Activated T-helper 2 cell treated with anti-CD3 and anti-CD28 coated beads, Interferon-gamma antibody, Interleukin-2, Interleukin-4, amounts not matched to agents 10 μg/mL and 5 μg/mL and 100 μg/mL, durations not matched to agents 14 hours and 24 hours and 36 hours (primary cell): ENCODE measurements at regions of chr3 and their contacts with region 1.

Region 1: DNA sequence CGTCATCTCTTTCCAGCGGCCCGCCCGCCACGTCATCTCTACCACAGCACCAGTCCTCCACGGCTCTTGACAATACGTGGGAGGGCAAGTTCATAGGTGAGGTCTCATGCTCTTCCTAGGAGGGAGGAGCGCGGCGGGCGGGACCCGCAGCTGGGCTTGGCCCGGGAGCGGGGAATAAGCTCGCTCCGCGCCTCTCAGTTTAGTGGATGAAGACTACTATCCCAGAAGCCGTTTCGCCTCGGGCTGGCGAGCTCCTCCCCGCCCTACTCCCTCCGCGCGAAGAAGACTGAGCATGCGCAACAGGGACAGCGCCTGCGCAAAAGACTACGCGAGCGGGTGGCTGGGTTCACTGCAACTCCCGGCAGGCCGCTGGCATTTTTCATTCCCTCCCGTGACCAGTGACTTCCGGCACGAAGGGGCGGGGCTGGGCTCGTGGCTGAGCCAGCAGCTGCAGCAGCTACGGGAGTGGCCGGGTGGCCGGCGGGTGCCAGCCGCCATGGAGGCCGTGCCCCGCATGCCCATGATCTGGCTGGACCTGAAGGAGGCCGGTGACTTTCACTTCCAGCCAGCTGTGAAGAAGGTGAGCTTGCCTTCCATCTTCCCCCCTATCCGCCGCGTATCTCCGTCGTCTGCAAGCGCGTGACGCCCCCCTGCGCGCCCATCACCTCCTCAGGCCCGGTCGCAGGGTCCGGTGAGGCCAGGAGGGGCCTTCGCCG is at the start of gene PTPN23:
- DNase-seq: peak; percentile 99
- H3K4me3 Mint-ChIP-seq: peak within 1 kb of the TSS; percentile 100
- H3K27ac Mint-ChIP-seq: peak within 1 kb of the TSS; percentile 100
- H3K4me1 Mint-ChIP-seq: peaks cover 33% of the 10 kb centered on the region
- H3K27me3 Mint-ChIP-seq: no peaks in the 10 kb centered on the region
- total RNA-seq, gene PTPN23: 35.7 and 38.3 TPM in 2 replicates

Region 2: DNA sequence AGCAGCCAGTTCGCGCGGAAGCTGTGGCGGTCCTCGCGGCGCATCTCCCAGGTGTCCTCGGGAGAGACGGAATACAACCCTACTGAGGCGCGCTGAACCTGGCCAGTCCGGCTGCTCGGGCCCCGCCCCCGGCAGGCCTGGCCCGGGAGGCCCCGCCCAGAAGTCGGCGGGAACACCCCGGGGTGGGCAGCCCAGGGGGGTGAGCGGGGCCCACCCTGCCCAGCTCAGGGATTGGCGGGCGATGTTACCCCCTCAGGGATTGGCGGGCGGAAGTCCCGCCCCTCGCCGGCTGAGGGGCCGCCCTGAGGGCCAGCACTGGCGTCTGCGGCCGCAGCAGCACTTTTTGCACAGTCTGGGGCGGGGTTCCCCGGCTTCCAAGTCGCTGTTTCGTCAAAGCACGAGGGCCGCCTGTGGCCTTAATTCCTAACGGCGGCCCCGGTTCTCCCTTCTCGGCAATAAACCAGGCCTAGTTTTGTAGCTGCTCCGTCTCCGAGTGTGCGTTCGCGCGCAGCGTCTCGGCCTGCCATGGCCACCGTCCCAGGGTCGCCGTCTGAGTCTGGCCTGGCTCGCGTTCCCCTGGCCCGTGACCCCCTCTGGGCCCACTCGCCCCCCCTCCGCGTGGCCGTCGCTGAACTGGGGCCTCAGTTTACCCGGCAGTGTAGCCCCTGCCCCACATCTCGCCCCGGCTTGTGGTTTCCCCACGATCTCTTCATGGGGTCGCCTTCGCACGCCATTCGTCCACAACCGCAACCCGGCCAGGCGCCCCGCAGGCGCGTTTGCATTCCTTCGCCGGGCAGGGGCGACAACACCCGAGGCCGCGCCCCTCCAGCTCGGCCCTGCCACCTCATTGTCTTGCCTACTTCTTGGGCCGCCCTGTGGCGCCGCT is 371.3 kb before region 1 on chr3:
- intact Hi-C with region 1: loop called (anchors 10 kb)
- DNase-seq: peak; percentile 50
- H3K4me3 Mint-ChIP-seq: no peak overlapping the region
- H3K27ac Mint-ChIP-seq: peak overlapping the region; percentile 8
- H3K4me1 Mint-ChIP-seq: no peaks in the 10 kb centered on the region
- H3K27me3 Mint-ChIP-seq: no peaks in the 10 kb centered on the region

Region 3: DNA sequence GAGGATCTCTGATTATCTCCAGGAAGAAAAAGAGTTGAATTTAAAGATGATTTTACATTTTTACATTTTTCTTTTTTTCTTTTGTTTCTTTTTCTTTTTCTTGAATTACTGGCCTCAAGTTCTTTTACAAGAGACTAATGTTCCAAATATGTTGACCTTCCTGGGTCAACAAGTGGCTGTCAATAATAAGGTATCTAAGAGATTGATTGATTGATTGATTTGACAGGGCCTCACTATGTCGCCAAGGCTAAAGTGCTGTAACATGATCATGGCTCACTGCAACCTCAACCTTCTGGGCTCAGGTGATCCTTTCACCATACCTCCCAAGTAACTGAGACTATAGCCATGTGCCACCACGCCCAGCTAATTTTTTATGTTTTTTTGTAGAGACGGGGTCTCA is 142.7 kb before region 1 on chr3:
- intact Hi-C with region 1: no loop called
- DNase-seq: no peak
- H3K4me3 Mint-ChIP-seq: no peak overlapping the region
- H3K27ac Mint-ChIP-seq: no peak overlapping the region
- H3K4me1 Mint-ChIP-seq: peaks cover 3% of the 10 kb centered on the region
- H3K27me3 Mint-ChIP-seq: no peaks in the 10 kb centered on the region

Region 4: GRCh38 chr3:47282424-47283192 is 98.2 kb before region 1 on chr3 and contains the starts of genes KIF9 and KLHL18:
- intact Hi-C with region 1: loop called (anchors 2 kb)
- DNase-seq: peak; percentile 95
- H3K4me3 Mint-ChIP-seq: peak within 1 kb of the TSS; percentile 98
- H3K27ac Mint-ChIP-seq: peak within 1 kb of the TSS; percentile 100
- H3K4me1 Mint-ChIP-seq: peaks cover 17% of the 10 kb centered on the region
- H3K27me3 Mint-ChIP-seq: no peaks in the 10 kb centered on the region
- total RNA-seq, gene KIF9: 3.5 and 4.4 TPM in 2 replicates
- total RNA-seq, gene KLHL18: 35.7 and 40.9 TPM in 2 replicates

Region 5: DNA sequence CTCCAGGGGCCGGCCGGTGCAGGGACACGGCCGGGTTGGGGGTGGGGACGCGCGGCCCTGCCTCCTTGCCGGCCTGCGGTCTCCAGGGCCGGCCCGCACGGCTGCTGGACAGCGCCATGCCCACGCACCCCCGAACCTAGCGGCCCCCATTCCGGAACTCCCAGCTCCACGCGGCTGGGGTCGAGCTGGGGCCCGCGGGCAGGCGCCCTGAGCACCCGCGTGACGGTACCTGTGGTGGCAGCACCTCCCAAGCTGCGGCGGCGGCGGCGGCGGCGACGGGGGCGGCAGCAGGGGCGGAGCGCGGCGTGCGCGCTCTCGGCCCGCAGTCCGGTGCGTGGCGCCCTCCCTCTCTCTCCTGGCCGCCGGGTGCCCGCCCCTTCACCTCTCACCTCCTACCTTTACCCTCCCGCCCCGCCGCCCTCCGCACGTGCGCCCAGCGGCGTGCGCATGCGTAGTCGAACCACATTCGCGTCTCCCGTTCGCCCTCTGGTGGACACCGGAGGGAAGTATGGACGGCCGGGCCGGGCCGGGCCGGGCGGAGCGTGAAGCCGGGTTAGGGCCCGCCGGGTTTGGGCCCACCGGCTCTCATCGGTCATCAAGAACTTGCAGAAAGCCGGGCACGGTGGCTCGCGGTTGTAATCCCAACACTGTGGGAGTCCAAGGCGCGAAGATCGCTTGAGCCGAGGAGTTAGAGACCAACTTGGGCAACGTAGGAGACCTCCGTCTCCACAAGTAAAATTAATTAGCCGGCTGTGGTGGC is 95.0 kb after region 1 on chr3 and contains the start of gene SCAP:
- intact Hi-C with region 1: loop called (anchors 2 kb)
- DNase-seq: peak; percentile 92
- H3K4me3 Mint-ChIP-seq: peak within 1 kb of the TSS; percentile 99
- H3K27ac Mint-ChIP-seq: peak within 1 kb of the TSS; percentile 94
- H3K4me1 Mint-ChIP-seq: peaks cover 17% of the 10 kb centered on the region
- H3K27me3 Mint-ChIP-seq: no peaks in the 10 kb centered on the region
- total RNA-seq, gene SCAP: 79.6 and 83.9 TPM in 2 replicates